Esophagus muscularis mucosa (tissue), 4 donors: ENCODE measurements at regions of chr15 and their contacts with region 1.

Region 1: GRCh38 chr15:84588053-84588874 is 12.5 kb upstream of the ZSCAN2 start:
- DNase-seq: peak; percentile 94
- H3K4me3 ChIP-seq: peak overlapping the region; percentile 35 to 50 (median 38)
- H3K27ac ChIP-seq: no peak overlapping the region
- H3K4me1 ChIP-seq: peaks cover 0 to 11% (median 9%) of the 10 kb centered on the region in 4 donors
- H3K27me3 ChIP-seq: no peaks in the 10 kb centered on the region
- CTCF ChIP-seq: peak in 2 of 3 experiments; percentile 67 to 89
- EP300 ChIP-seq: no peak
- POLR2A ChIP-seq: no peak

Region 2: GRCh38 chr15:84797212-84797611 is 208.9 kb after region 1 on chr15:
- intact Hi-C with region 1: no loop called
- DNase-seq: no peak
- H3K4me3 ChIP-seq: no peak overlapping the region
- H3K27ac ChIP-seq: no peak overlapping the region
- H3K4me1 ChIP-seq: peaks cover 0 to 8% (median 5%) of the 10 kb centered on the region in 4 donors
- H3K27me3 ChIP-seq: no peaks in the 10 kb centered on the region
- CTCF ChIP-seq: no peak
- EP300 ChIP-seq: no peak
- POLR2A ChIP-seq: no peak

Region 3: GRCh38 chr15:84874981-84875699 is 286.9 kb after region 1 on chr15:
- intact Hi-C with region 1: loop called (anchors 5 kb)
- DNase-seq: no peak
- H3K4me3 ChIP-seq: no peak overlapping the region
- H3K27ac ChIP-seq: no peak overlapping the region
- H3K4me1 ChIP-seq: peaks cover 0 to 7% (median 2%) of the 10 kb centered on the region in 4 donors
- H3K27me3 ChIP-seq: no peaks in the 10 kb centered on the region
- CTCF ChIP-seq: no peak
- EP300 ChIP-seq: no peak
- POLR2A ChIP-seq: no peak